OCI-LY7 (cell line): ENCODE measurements at regions of chr11 and their contacts with region 1.

Region 1: DNA sequence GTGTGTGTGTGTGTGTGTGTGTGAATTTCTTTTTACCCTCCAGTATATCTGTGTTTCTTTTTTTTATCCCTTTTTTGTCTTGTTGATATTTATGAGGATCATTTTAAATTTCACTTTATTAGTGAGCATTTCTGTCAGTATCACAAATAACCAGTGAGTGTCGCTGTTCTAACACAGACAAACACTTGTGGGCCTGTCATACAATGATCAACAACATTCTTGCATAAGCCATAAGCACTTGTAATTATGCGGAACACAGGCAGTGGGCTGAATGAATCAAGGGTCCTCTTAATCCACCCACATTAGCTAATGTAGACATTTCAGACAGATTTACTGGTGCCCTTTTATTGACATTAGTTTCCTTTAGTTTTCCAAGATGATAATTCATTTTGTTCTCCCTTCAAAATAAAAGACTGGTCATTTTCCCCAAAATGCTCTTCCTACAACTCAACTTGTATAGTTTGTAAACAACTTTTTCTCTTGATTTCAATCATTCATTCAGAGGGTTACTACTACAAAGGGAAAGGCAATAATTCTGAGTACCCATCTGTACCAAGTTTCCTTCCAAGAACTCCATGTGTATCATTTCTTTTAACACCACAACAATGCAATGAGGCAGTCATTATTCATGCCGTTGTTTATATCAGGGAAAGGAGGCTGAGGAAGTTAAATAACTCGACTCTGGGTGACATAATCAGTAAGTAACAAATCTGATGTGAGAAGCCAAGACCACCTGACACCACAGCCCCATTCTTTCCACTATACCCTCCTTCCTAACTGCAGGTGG is 34.5 kb upstream of the ANO3 start:
- DNase-seq: peak; percentile 69
- H3K4me3 ChIP-seq: no peak overlapping the region
- H3K27ac ChIP-seq: no peak overlapping the region
- H3K4me1 ChIP-seq: no peaks in the 10 kb centered on the region
- CTCF ChIP-seq: peak; percentile 92

Region 2: GRCh38 chr11:26199331-26200095 is 97.9 kb before region 1 on chr11:
- CTCF ChIA-PET with region 1: no interaction called
- POLR2A ChIA-PET with region 1: no interaction called
- intact Hi-C with region 1: no loop called
- DNase-seq: no peak
- H3K4me3 ChIP-seq: no peak overlapping the region
- H3K27ac ChIP-seq: no peak overlapping the region
- H3K4me1 ChIP-seq: no peaks in the 10 kb centered on the region
- CTCF ChIP-seq: no peak

Region 3: DNA sequence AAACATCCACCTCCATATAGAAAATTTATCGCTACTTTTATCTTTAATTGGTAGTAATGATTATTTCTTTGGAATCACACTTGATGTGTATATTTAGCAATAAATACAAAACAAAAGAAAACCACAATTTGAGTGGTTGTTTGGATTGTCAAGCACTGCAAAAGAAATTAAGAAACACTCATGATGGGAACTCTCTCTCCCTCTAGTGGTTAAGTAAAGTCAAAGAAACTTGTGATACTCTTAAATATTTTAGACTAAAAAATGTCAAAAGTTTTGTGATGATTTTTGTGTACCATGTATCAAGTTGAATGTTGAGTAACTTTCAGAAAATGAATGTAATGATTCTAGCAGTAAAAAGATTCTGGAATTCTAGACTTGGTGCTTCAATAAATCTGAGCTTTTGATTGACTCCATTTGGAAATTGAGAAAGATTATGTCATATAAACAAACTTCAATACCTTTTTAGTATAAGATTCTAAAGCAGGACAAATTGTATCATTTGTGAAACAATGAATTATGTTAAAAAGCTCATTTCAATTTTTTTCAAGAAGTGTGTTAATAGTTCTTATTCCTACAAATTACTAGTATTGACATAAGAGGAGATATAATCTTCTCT is 253.9 kb after region 1 on chr11:
- CTCF ChIA-PET with region 1: no interaction called
- POLR2A ChIA-PET with region 1: no interaction called
- intact Hi-C with region 1: loop called (anchors 10 kb)
- DNase-seq: no peak
- H3K4me3 ChIP-seq: no peak overlapping the region
- H3K27ac ChIP-seq: no peak overlapping the region
- H3K4me1 ChIP-seq: no peaks in the 10 kb centered on the region
- CTCF ChIP-seq: peak; percentile 70

Region 4: GRCh38 chr11:27158722-27159679 is 861.6 kb after region 1 on chr11:
- CTCF ChIA-PET with region 1: no interaction called
- POLR2A ChIA-PET with region 1: no interaction called
- intact Hi-C with region 1: loop called (anchors 2 kb)
- DNase-seq: peak; percentile 71
- H3K4me3 ChIP-seq: no peak overlapping the region
- H3K27ac ChIP-seq: no peak overlapping the region
- H3K4me1 ChIP-seq: no peaks in the 10 kb centered on the region
- CTCF ChIP-seq: peak; percentile 88